Calu3 (cell line): ENCODE measurements at regions of chr6 and their contacts with region 1.

Region 1: DNA sequence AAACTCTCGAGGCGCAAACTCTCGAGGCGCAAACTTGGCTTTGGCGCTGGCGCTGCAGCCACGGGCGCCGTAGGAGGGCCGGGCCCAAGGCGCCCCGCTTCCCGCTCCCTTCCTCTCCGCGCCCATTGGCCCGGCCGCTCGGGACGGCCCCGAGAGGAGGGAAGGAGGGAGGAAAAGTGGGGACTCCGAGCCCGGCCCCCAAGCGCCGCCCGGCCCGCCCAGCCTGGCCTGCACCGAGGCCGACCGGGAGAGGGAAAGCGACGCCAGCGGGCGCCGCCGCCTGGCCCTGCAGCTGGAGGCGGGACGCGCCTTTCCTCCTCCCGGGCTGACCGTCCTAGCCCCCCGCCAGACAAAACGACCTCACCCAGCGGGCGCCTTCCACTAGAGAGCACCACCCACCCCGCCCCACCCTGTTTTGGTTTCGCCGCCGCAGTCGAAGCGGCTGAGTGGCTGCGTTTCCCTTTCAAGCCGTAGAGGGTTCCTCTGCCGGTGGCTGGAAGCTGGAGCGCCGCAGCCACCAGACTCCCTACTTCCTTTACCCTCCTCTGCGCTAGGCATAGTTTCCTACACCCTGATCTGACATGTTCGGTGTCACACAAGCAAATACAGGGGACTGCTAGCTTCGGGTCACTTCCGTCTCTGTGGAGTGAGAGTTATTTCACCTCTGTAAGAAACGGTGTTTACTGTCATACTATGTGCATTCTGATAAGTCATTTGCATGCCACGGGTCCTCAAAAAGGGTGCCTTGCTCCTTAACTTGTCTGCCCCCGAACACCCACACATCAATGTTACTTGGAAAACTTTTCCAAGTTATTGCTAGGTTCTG is at the start of gene MBOAT1:
- DNase-seq: peak; percentile 99
- H3K4me3 Mint-ChIP-seq: peak within 1 kb of the TSS; percentile 86
- H3K27ac Mint-ChIP-seq: peak within 1 kb of the TSS; percentile 99
- H3K4me1 Mint-ChIP-seq: peaks cover 45% of the 10 kb centered on the region
- H3K27me3 Mint-ChIP-seq: no peaks in the 10 kb centered on the region
- CTCF ChIP-seq: peak; percentile 42
- total RNA-seq, gene MBOAT1: 39.9 and 47.8 TPM in 2 replicates

Region 2: DNA sequence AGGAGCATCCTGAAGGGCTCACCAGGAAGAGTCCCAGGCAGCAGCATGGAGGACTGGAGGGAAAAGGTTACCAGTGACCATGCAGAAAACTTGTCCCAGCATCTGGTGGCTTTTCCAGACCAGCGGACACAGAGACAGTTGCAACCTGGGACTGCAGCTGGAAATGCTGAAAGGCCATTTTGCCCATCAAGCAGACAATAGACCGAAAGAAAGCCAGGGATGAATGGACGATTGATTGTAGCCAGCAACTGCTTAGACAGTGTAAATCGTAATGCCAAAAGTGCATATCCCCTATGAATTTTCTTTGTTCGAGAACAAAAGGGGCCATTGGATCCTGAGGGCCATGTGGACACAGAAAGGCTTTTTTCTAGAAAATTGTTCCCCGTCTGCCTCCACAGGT is 116.1 kb before region 1 on chr6:
- CTCF ChIA-PET with region 1: no interaction called
- intact Hi-C with region 1: no loop called
- DNase-seq: no peak
- H3K4me3 Mint-ChIP-seq: no peak overlapping the region
- H3K27ac Mint-ChIP-seq: no peak overlapping the region
- H3K4me1 Mint-ChIP-seq: no peaks in the 10 kb centered on the region
- H3K27me3 Mint-ChIP-seq: no peaks in the 10 kb centered on the region
- CTCF ChIP-seq: no peak

Region 3: GRCh38 chr6:20202324-20202658 is 10.3 kb before region 1 on chr6:
- CTCF ChIA-PET with region 1: interaction called, 20 read pairs
- intact Hi-C with region 1: no loop called
- DNase-seq: no peak
- H3K4me3 Mint-ChIP-seq: peak overlapping the region; percentile 69
- H3K27ac Mint-ChIP-seq: peak overlapping the region; percentile 95
- H3K4me1 Mint-ChIP-seq: peaks cover 66% of the 10 kb centered on the region
- H3K27me3 Mint-ChIP-seq: no peaks in the 10 kb centered on the region
- CTCF ChIP-seq: no peak

Region 4: DNA sequence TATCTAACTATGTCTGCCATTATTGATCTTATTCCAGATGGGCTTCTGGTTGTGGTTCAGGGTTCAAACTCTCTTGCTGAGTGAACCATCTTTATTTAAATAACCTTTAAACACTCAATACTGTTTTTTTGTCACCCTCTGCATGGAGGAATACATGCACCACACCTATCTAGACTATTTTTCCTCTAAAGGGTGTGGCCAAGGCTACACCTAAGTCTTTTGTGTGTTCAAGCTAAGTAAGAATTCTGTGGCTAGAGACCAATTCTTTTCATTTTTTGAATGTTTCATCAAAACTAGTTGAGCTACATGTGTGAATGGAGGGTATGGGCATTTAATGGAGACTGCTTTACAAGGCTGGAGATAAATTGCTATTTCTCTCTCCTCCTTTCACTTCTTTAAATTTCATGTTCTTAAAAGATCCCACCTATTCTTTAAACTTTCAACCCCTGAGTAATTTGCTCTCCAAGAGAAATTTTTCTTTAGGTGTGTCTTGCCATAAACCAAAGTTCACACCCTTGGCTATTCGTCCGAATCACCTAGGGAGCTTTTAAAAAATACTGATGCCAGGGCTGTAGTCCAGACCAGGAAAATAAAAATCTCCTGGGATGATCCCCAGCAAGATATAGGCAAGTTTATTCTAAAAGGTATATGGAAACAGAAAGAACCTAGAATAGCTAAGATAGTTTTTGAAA is 24.4 kb after region 1 on chr6:
- CTCF ChIA-PET with region 1: interaction called, 14 read pairs
- intact Hi-C with region 1: loop called (anchors 1 kb)
- DNase-seq: peak; percentile 46
- H3K4me3 Mint-ChIP-seq: peak overlapping the region; percentile 13
- H3K27ac Mint-ChIP-seq: peak overlapping the region; percentile 87
- H3K4me1 Mint-ChIP-seq: peaks cover 38% of the 10 kb centered on the region
- H3K27me3 Mint-ChIP-seq: no peaks in the 10 kb centered on the region
- CTCF ChIP-seq: no peak

Region 5: GRCh38 chr6:20266851-20267608 is 54.4 kb after region 1 on chr6:
- CTCF ChIA-PET with region 1: no interaction called
- intact Hi-C with region 1: loop called (anchors 1 kb)
- DNase-seq: peak; percentile 80
- H3K4me3 Mint-ChIP-seq: peak overlapping the region; percentile 0
- H3K27ac Mint-ChIP-seq: peak overlapping the region; percentile 68
- H3K4me1 Mint-ChIP-seq: peaks cover 35% of the 10 kb centered on the region
- H3K27me3 Mint-ChIP-seq: no peaks in the 10 kb centered on the region
- CTCF ChIP-seq: peak; percentile 29

Region 6: GRCh38 chr6:20291764-20292580 is 79.4 kb after region 1 on chr6:
- CTCF ChIA-PET with region 1: interaction called, 6 read pairs
- intact Hi-C with region 1: loop called (anchors 1 kb)
- DNase-seq: peak; percentile 93
- H3K4me3 Mint-ChIP-seq: no peak overlapping the region
- H3K27ac Mint-ChIP-seq: peak overlapping the region; percentile 14
- H3K4me1 Mint-ChIP-seq: no peaks in the 10 kb centered on the region
- H3K27me3 Mint-ChIP-seq: no peaks in the 10 kb centered on the region
- CTCF ChIP-seq: peak; percentile 97

Region 7: DNA sequence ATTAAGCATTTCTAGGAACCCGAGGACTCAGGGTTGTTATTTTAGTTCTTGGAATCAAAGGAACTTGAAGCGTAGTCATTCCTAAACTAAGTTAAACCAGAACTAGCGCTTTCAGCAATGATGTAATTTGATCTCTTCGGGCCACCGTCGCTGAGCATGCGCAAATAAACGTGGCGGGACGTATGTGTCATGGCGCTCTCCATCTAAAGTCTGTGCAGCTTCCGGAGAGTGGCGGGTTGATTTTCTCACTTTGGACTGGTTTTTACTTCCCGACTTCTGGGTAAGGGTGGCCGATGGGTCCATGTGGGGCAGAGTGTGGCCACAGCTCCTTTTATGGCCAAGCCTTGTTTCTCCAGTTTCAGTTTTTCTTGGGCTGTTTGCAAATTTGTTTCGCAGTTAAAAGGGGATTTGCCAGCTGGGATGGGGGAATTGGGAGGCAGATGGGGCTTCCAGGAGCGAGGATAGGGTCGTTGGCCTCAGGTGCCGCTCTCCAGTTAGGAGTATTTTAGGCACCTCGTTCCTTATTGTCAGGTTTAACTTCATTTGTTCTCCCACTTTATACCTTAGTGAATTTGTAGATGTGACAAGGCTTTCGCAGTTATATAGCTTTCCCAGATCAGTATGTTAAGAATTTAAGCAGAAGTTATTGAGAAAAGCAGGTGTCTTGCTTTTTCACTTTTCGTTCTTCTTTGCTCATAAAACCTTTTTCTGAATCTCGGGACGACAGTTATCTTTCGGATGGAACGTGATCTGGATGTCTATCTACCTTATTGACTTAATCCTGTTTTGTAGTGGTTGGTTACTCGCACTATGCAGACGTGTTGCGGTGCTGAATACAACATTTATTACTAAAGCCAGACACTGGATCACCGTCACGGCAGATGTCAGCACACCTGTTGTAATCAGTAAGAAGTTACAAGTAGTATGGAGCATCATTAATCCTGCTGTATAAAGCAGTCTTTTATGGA is 322.0 kb after region 1 on chr6 and contains the start of gene CDKAL1:
- CTCF ChIA-PET with region 1: no interaction called
- intact Hi-C with region 1: loop called (anchors 2 kb)
- DNase-seq: peak; percentile 94
- H3K4me3 Mint-ChIP-seq: peak within 1 kb of the TSS; percentile 84
- H3K27ac Mint-ChIP-seq: peak within 1 kb of the TSS; percentile 87
- H3K4me1 Mint-ChIP-seq: peaks cover 35% of the 10 kb centered on the region
- H3K27me3 Mint-ChIP-seq: no peaks in the 10 kb centered on the region
- CTCF ChIP-seq: no peak
- total RNA-seq, gene CDKAL1: 37.8 and 39.6 TPM in 2 replicates